Left lung (tissue), 14 donors: ENCODE measurements at regions of chrX and their contacts with region 1.

Region 1: GRCh38 chrX:17247145-17247544 is 127.9 kb upstream of the NHS start:
- DNase-seq: no peak
- ATAC-seq: no peak
- H3K4me3 ChIP-seq: no peak overlapping the region
- H3K27ac ChIP-seq: no peak overlapping the region
- H3K4me1 ChIP-seq: no peaks in the 10 kb centered on the region
- H3K27me3 ChIP-seq: no peaks in the 10 kb centered on the region
- CTCF ChIP-seq: no peak

Region 2: DNA sequence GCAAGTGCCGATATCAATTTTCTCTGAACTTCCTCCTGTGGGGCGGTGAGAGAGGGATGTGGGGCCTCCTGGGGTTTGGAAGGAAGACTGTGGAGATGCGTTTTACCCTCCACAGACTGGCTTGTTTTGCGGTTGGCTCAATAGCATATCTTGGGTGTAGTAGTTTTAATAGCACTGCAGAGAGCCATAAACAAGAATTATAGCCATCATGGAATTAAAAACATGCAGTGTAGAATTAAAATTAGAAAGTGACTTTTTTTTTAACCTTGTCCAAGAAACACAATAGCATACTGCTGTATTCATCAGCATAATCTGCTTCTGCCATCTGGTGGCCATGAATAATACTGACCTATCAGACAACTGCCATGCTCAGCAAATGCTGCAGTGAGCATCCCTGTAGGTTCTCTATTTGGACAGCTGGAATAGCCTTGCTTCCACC is 442.8 kb after region 1 on chrX:
- intact Hi-C with region 1: loop called in 1 of 2 experiments (anchors 5 kb)
- DNase-seq: peak in 2 of 4 donors; percentile 47 to 70
- ATAC-seq: peak; percentile 94
- H3K4me3 ChIP-seq: no peak overlapping the region
- H3K27ac ChIP-seq: no peak overlapping the region
- H3K4me1 ChIP-seq: no peaks in the 10 kb centered on the region
- H3K27me3 ChIP-seq: no peaks in the 10 kb centered on the region
- CTCF ChIP-seq: peak; percentile 44 to 71